IMR-90 (cell line): ENCODE measurements at regions of chr2 and their contacts with region 1.

Region 1: GRCh38 chr2:74109551-74109950 is 38.2 kb downstream of the BOLA3 start:
- DNase-seq: no peak
- ATAC-seq: no peak
- H3K4me3 ChIP-seq: no peak overlapping the region
- H3K27ac ChIP-seq: no peak overlapping the region
- H3K4me1 ChIP-seq: no peaks in the 10 kb centered on the region
- H3K27me3 ChIP-seq: no peaks in the 10 kb centered on the region
- CTCF ChIP-seq: no peak
- POLR2A ChIP-seq: no peak
- RAD21 ChIP-seq: no peak

Region 2: GRCh38 chr2:73896362-73897239 is 212.9 kb before region 1 on chr2:
- CTCF ChIA-PET with region 1: no interaction called
- POLR2A ChIA-PET with region 1: interaction called, 12 read pairs
- dilution Hi-C with region 1: no loop called
- in situ Hi-C with region 1: no loop called
- intact Hi-C with region 1: no loop called
- DNase-seq: peak; percentile 92
- ATAC-seq: 0 out of 2 replicates have a peak, but pooled peaks have one; percentile 1
- H3K4me3 ChIP-seq: no peak overlapping the region
- H3K27ac ChIP-seq: peak overlapping the region; percentile 35; the same call in 1 of the 2 replicates
- H3K4me1 ChIP-seq: peaks cover 26% of the 10 kb centered on the region
- H3K27me3 ChIP-seq: no peaks in the 10 kb centered on the region
- CTCF ChIP-seq: no peak
- POLR2A ChIP-seq: no peak
- RAD21 ChIP-seq: no peak